CD4-positive, alpha-beta T cell (primary cell): ENCODE measurements at regions of chr1 and their contacts with region 1.

Region 1: GRCh38 chr1:77126307-77126706 is 92.9 kb downstream of the PIGK start:
- DNase-seq: peak in 5 of 14 experiments; percentile 7 to 64 (median 52)
- ATAC-seq: peak; percentile 76
- H3K4me3 ChIP-seq: no peak overlapping the region
- H3K4me3 Mint-ChIP-seq: no peak overlapping the region
- H3K27ac ChIP-seq: no peak overlapping the region
- H3K27ac Mint-ChIP-seq: no peak overlapping the region
- H3K4me1 ChIP-seq: no peaks in the 10 kb centered on the region
- H3K4me1 Mint-ChIP-seq: no peaks in the 10 kb centered on the region
- H3K27me3 ChIP-seq: no peaks in the 10 kb centered on the region
- H3K27me3 Mint-ChIP-seq: no peaks in the 10 kb centered on the region
- CTCF ChIP-seq: no peak

Region 2: DNA sequence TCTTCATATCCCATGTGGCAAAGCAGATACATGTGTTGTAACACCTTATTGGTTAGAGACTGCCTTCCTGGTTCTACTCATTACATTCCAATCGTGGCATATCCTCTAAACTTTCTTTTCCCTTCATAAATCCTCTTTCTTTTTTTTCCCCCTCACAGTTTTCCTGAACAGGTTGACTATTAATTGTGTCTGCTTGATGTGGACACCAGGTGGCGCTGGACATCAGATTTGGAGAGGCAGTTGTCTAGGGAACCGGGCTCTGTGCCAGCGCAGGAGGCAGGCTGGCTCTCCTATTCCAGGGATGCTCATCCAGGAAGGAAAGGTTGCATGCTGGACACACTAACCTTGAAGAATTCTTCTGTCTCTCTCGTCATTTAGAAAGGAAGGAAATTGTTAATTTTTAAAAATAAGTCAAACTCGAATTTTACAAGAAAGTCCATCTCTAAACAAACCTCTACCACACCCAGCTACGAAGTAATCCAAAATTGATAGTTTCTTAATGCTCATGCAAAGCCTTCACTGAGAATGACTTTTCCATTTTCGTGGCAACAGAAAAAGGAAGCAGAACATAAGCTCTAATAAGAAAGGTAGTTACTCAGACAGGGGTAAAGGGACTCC is 1134.7 kb before region 1 on chr1:
- CTCF ChIA-PET with region 1: no interaction called
- POLR2A ChIA-PET with region 1: interaction called, 3 read pairs
- intact Hi-C with region 1: loop called in 1 of 2 experiments (anchors 1 kb)
- DNase-seq: peak; percentile 45 to 84 (median 64)
- ATAC-seq: peak; percentile 56
- H3K4me3 ChIP-seq: no peak overlapping the region
- H3K4me3 Mint-ChIP-seq: no peak overlapping the region
- H3K27ac ChIP-seq: no peak overlapping the region
- H3K27ac Mint-ChIP-seq: no peak overlapping the region
- H3K4me1 ChIP-seq: no peaks in the 10 kb centered on the region
- H3K4me1 Mint-ChIP-seq: no peaks in the 10 kb centered on the region
- H3K27me3 ChIP-seq: peaks cover 0 to 3% of the 10 kb centered on the region in 2 experiments
- H3K27me3 Mint-ChIP-seq: no peaks in the 10 kb centered on the region
- CTCF ChIP-seq: peak; percentile 83